ENCODE measurements at regions of chr20 and their contacts with region 1.

Region 1: DNA sequence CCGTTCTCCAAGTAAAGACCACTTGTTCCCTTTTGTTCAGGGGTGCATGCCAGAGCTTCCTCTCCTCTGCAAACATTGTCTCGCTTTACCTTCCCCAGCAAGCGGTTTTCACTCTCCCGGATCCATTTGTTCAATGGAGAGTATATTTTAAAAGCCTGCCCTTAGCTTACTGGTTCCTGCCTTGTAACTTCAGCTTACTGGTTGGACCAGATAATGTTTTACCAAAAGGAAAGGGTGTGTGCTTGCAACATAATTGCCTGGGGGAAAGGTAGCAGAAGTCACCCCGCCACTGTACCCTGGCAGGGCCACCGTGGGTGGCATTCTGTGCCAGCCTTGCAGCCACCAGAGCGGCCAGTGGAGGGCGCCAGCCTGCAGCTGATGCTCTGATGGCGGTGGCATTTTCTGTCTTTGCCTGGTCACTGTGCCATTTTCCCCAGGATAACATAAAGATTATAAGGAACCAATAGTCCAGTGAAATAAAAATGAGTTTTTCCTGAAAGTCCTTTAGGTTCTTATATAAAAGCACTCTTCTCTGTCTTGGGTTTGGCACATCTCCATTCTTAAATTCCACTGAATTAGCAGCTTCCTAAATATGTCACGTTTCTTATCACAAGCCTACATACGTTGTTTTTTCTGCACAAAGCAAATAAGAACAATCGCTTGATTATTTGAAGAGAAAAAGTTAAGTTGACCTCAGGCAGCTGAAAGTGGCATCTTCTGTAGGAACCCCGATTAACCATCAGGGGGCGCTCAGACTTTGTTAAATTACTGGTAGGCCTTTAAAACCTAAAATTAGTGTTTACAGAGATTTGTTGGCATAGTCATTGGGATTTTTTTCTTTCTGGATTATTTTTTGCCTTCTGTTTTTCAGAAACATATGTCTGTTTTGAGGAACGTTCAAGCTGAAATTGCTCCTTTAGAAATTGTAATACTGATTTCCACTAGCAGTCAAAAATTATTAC is 67.4 kb upstream of the XRN2 start:
- DNase-seq: peak; percentile 43
- H3K4me3 ChIP-seq: no peak overlapping the region
- H3K27ac ChIP-seq: no peak overlapping the region
- H3K4me1 ChIP-seq: peaks cover 6% of the 10 kb centered on the region
- H3K27me3 ChIP-seq: no peaks in the 10 kb centered on the region
- CTCF ChIP-seq: peak; percentile 80 to 97

Region 2: GRCh38 chr20:20824924-20825584 is 410.7 kb before region 1 on chr20:
- CTCF ChIA-PET with region 1: no interaction called
- dilution Hi-C with region 1: no loop called
- in situ Hi-C with region 1: no loop called
- intact Hi-C with region 1: no loop called
- DNase-seq: no peak
- H3K4me3 ChIP-seq: no peak overlapping the region
- H3K27ac ChIP-seq: no peak overlapping the region
- H3K4me1 ChIP-seq: no peaks in the 10 kb centered on the region
- H3K27me3 ChIP-seq: no peaks in the 10 kb centered on the region
- CTCF ChIP-seq: peak; percentile 72 to 79

Region 3: DNA sequence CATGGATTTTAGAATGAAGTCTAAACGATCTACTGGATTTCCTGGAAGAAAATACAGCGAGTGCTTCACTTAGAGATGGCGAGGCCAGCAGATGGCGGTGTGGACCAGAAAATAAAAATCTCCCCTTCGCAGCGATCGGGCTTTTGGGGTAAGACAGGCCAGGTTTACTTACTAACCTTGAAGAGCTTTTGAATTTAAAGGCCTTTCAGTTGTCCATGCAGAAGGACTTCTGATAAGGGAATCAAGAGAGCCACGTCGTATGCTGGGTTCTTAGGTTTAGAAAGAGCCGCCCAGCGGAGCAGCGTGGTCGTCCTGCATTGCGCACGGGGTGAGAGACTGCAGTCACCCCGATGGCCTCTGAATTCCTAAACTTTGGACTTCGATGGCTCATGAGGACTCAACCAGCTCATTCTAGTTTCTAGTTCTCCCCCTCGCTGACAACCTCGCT is 398.2 kb before region 1 on chr20:
- CTCF ChIA-PET with region 1: no interaction called
- dilution Hi-C with region 1: no loop called
- in situ Hi-C with region 1: no loop called
- intact Hi-C with region 1: loop called (anchors 1 kb)
- DNase-seq: no peak
- H3K4me3 ChIP-seq: no peak overlapping the region
- H3K27ac ChIP-seq: no peak overlapping the region
- H3K4me1 ChIP-seq: no peaks in the 10 kb centered on the region
- H3K27me3 ChIP-seq: peaks cover 2% of the 10 kb centered on the region
- CTCF ChIP-seq: peak; percentile 58 to 63

Region 4: DNA sequence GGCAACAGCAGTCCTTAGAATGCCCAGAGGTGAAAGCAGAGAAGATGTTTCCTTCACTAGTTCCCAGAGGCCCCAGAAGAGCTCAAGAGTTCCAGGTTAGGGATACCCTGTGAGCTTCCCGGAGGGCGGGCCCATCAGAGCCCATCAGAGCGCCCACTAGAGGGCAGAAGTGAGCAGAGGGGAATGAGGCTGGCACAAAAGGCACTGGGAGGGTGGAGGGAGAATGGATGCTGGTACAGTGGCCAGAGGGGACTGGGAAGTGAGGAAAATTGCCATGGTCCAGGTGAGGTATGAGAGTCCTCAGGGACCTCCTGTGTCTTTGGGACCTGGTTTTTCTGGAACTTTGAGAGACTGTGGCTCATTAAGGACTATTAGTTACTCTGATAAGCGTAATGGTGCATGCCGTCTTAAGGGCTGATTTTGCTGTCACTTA is 186.9 kb before region 1 on chr20:
- CTCF ChIA-PET with region 1: no interaction called
- dilution Hi-C with region 1: no loop called
- in situ Hi-C with region 1: no loop called
- intact Hi-C with region 1: loop called (anchors 10 kb)
- DNase-seq: no peak
- H3K4me3 ChIP-seq: no peak overlapping the region
- H3K27ac ChIP-seq: no peak overlapping the region
- H3K4me1 ChIP-seq: no peaks in the 10 kb centered on the region
- H3K27me3 ChIP-seq: no peaks in the 10 kb centered on the region
- CTCF ChIP-seq: peak; percentile 82 to 87

Region 5: DNA sequence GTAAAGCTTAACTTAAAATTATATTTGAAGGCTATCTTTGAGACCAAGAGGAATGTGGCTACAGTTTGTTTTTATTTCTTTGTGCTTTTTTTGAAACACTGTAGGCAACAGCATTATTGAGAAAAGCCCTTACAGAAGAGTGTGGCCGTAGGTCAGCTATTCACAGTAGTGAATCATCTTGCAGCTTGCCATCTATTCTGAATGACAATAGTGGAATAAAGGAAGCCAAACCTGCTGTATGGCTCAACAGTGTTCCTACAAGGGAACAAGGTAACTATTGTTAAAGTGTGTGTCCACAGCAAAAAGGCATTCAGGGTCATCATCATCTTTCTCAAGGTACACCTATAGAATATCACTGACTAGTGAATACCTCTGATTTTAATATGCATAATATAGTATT is 21.3 kb before region 1 on chr20:
- CTCF ChIA-PET with region 1: no interaction called
- dilution Hi-C with region 1: no loop called
- in situ Hi-C with region 1: no loop called
- intact Hi-C with region 1: no loop called
- DNase-seq: peak; percentile 62
- H3K4me3 ChIP-seq: no peak overlapping the region
- H3K27ac ChIP-seq: no peak overlapping the region
- H3K4me1 ChIP-seq: no peaks in the 10 kb centered on the region
- H3K27me3 ChIP-seq: no peaks in the 10 kb centered on the region
- CTCF ChIP-seq: no peak

Region 6: DNA sequence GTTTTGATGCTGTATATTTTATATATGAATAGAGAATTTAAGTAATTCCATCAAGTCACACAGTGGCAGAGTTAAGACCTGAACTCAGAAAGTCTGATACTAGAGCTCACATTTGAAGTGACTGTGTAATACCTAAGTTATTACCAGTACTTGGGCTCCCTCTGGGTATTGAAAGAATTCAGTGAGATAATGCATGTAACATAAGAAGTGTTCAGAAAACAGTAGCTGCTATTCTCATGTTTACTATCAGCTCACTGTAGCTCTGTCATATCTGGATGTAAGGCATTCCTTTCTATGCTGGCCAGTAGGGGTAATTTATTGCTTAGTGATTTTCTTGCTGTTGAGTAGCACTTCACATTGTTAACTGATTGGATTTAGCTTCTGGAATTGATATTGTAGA is 116.9 kb after region 1 on chr20:
- CTCF ChIA-PET with region 1: no interaction called
- dilution Hi-C with region 1: no loop called
- in situ Hi-C with region 1: no loop called
- intact Hi-C with region 1: loop called (anchors 2 kb)
- DNase-seq: no peak
- H3K4me3 ChIP-seq: no peak overlapping the region
- H3K27ac ChIP-seq: no peak overlapping the region
- H3K4me1 ChIP-seq: no peaks in the 10 kb centered on the region
- H3K27me3 ChIP-seq: no peaks in the 10 kb centered on the region
- CTCF ChIP-seq: no peak

Region 7: DNA sequence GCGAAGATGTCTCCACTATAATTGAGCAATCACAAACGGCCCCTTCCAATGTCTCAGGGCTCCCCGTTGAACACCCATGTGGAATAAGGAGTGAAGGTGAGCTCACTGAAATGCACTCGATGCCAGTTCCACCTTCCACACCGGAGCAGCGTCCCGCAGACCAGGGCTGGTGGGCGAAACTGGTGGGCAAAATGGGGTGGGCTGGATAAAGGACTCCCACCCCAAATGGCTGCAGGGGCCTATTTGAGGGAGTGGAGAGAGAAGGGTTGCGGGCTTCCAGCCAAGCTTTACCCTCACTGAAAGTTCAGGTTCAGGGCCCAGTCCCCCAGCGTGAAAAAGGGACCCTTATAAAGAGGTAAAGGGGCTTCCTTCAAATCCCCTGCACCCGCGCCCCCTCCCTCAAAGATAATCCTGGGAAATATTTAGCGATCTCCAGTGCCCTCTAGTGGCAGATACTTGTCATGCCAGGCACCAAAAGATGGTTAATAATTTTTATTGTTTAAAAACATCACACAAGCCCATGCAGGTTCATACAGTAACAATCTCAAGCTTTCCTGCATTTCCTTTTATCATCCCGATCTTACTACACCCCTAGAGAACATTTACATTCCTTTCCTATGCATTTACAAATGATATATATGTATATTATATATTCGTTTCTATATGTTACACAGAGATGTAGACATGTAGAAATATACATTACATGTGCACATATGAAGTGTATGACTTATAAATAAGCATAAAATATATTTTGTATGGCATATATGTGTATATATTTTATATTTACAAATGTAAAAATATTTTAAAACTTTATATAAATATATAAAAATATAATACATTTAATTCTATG is 336.3 kb after region 1 on chr20:
- CTCF ChIA-PET with region 1: no interaction called
- dilution Hi-C with region 1: no loop called
- in situ Hi-C with region 1: no loop called
- intact Hi-C with region 1: loop called (anchors 2 kb)
- DNase-seq: no peak
- H3K4me3 ChIP-seq: no peak overlapping the region
- H3K27ac ChIP-seq: no peak overlapping the region
- H3K4me1 ChIP-seq: peaks cover 4% of the 10 kb centered on the region
- H3K27me3 ChIP-seq: no peaks in the 10 kb centered on the region
- CTCF ChIP-seq: peak; percentile 76 to 77

Region 8: GRCh38 chr20:21615617-21616080 is 379.9 kb after region 1 on chr20:
- CTCF ChIA-PET with region 1: no interaction called
- dilution Hi-C with region 1: no loop called
- in situ Hi-C with region 1: no loop called
- intact Hi-C with region 1: loop called (anchors 1 kb)
- DNase-seq: peak; percentile 43
- H3K4me3 ChIP-seq: no peak overlapping the region
- H3K27ac ChIP-seq: no peak overlapping the region
- H3K4me1 ChIP-seq: no peaks in the 10 kb centered on the region
- H3K27me3 ChIP-seq: peaks cover 2% of the 10 kb centered on the region
- CTCF ChIP-seq: peak; percentile 87 to 95